ENCODE measurements at regions of chr12 and their contacts with region 1.

Region 1: GRCh38 chr12:70733385-70733784 is 96.2 kb upstream of the PTPRB start:
- DNase-seq: peak; percentile 26
- H3K4me3 ChIP-seq: no peak overlapping the region
- H3K27ac ChIP-seq: no peak overlapping the region
- H3K4me1 ChIP-seq: no peaks in the 10 kb centered on the region
- H3K27me3 ChIP-seq: no peaks in the 10 kb centered on the region
- CTCF ChIP-seq: peak; percentile 67 to 72 (median 70)

Region 2: DNA sequence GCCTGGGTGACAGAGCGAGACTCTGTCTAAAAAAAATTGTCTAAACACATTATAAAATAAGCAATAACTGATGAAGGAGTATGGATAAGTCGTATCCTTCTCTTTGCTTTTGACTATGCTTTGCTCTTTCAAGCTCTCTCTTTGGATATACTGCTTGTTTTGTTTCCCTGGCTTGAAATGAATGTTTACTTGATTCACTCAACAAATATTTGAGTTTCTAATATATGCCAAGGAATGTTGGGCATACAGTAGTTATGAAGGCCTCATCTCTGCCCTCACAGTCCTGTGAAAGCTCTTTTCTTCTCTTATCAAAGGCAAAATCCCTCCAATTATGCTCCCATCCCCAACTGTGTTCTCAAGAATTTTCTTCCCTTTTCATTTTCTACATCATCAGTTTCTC is 63.6 kb after region 1 on chr12:
- dilution Hi-C with region 1: no loop called
- DNase-seq: no peak
- H3K4me3 ChIP-seq: no peak overlapping the region
- H3K27ac ChIP-seq: no peak overlapping the region
- H3K4me1 ChIP-seq: peaks cover 3% of the 10 kb centered on the region
- H3K27me3 ChIP-seq: no peaks in the 10 kb centered on the region
- CTCF ChIP-seq: no peak

Region 3: DNA sequence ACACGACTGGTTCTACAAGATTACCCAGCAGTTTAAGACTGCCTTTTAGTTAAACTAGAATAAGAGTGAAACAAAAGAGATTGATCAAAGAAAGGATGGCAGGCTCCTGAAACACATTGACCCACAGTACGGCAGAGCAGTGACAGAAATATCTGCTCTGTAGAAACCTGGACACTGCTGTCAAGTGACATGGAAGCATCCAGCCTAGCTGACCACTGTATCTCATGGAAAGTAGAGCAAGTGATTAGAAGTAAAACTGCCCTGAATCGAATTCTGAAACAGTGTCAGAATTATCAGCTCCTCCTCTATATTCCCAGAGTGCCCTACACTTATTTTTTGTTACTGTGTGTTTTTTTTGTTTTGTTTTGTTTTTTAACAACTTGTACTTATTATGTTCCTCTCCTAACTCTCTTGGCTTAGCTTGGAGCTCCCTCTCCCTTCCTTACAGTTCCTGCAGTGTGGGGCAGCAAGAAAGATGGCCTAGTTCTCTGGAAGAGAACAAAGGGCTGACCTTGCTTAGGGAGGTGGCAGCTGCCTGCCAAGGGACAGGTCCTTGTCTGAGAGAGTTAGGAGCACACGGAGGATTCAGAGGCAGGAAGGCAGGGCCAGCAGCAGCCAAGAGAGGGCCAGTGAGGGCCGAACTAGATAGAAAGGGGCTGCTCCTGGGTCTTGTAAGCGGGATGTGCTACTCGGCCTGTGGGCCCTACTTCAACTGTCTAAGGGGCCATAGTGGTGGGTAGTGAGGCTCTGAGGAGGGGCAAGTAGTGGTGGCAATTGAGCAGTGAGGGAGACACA is 90.0 kb after region 1 on chr12:
- dilution Hi-C with region 1: no loop called
- DNase-seq: no peak
- H3K4me3 ChIP-seq: no peak overlapping the region
- H3K27ac ChIP-seq: no peak overlapping the region
- H3K4me1 ChIP-seq: no peaks in the 10 kb centered on the region
- H3K27me3 ChIP-seq: no peaks in the 10 kb centered on the region
- CTCF ChIP-seq: peak in 2 of 3 experiments; percentile 9 to 29

Region 4: DNA sequence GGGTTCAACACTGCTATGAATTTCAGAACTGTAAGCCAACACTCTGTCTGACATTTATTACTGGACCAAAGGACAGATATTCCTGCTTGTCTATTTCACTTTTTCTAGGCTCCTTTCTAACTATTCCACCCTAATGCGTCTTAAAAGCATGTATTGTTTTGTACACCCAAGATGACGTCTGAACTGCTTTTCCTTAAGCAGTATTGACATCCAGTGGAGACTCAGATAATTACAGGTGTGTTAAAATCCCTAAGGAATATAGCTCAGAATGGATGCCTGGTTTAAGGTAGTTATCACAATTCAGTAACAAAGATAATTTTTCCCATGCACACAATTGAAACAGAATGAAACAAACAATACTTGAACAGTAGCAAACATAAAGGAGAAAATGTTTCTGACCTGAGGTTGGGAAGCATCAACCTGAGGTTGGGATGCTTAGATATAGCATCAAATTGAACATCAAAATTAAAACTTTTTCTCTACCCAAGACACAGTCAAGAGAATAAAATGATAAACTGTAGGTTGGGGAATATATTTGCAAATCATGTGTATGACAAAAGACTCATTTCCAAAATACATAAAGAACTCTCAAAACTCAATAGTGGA is 280.9 kb after region 1 on chr12:
- dilution Hi-C with region 1: loop called (anchors 25 kb)
- DNase-seq: no peak
- H3K4me3 ChIP-seq: no peak overlapping the region
- H3K27ac ChIP-seq: no peak overlapping the region
- H3K4me1 ChIP-seq: no peaks in the 10 kb centered on the region
- H3K27me3 ChIP-seq: no peaks in the 10 kb centered on the region
- CTCF ChIP-seq: peak in 2 of 3 experiments; percentile 35 to 46